CD8-positive, alpha-beta memory T cell (primary cell): ENCODE measurements at regions of chr7 and their contacts with region 1.

Region 1: DNA sequence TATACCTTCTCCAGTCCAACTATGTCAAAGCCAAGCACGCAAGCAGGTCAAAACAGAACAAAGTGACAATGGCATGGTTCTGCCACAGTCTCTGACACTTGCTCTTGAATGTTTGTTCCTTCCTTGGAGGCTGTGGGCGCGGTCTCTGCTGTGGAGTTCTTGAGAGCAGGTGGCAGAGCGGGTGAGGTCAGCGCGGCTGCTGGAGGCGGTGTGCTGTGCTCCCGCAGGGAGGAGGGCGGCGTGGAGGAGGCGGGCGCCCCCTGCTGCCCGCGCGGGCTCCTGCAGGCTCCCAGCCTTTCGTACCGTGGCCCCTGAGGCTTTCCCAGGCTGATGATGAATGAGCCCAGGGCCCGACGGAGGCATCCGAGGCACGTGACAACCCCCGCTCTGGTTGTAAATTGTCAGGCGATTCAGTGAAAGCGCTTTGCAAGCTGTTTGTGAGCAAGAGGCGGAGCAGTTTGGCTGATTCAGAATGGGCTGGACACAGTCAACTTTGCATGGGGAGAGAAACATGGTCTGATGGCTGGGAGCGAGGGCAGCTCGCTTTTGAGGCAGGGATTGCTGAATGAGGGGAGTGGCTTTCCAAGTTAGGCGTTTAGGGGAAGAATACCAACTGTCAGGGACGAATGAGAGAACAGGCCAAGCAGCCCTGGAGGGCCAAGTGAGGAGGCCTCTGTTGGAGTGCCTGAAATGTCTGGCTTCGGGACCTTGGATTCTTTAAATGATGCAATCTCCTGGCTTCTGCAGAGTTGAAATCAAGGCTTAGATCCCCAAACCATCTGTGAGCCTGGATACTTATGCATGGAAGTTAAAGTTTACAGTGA is 46.6 kb downstream of the CDHR3 start:
- DNase-seq: peak; percentile 63 to 81 (median 71)
- H3K4me3 ChIP-seq: no peak overlapping the region
- H3K4me3 Mint-ChIP-seq: peak overlapping the region in 5 of 7 donors; percentile 13 to 49 (median 30)
- H3K27ac ChIP-seq: no peak overlapping the region
- H3K27ac Mint-ChIP-seq: peak overlapping the region in 6 of 8 donors; percentile 28 to 96 (median 72)
- H3K4me1 ChIP-seq: peaks cover 29% of the 10 kb centered on the region
- H3K4me1 Mint-ChIP-seq: peaks cover 8 to 28% (median 25%) of the 10 kb centered on the region in 3 donors
- H3K27me3 ChIP-seq: no peaks in the 10 kb centered on the region
- H3K27me3 Mint-ChIP-seq: peaks cover 0 to 3% of the 10 kb centered on the region in 2 donors

Region 2: GRCh38 chr7:105734233-105734632 is 275.4 kb before region 1 on chr7:
- CTCF ChIA-PET with region 1: no interaction called
- POLR2A ChIA-PET with region 1: no interaction called
- DNase-seq: no peak
- H3K4me3 ChIP-seq: no peak overlapping the region
- H3K4me3 Mint-ChIP-seq: no peak overlapping the region
- H3K27ac ChIP-seq: no peak overlapping the region
- H3K27ac Mint-ChIP-seq: no peak overlapping the region
- H3K4me1 ChIP-seq: no peaks in the 10 kb centered on the region
- H3K4me1 Mint-ChIP-seq: peaks cover 0 to 16% (median 11%) of the 10 kb centered on the region in 3 donors
- H3K27me3 ChIP-seq: no peaks in the 10 kb centered on the region
- H3K27me3 Mint-ChIP-seq: no peaks in the 10 kb centered on the region

Region 3: DNA sequence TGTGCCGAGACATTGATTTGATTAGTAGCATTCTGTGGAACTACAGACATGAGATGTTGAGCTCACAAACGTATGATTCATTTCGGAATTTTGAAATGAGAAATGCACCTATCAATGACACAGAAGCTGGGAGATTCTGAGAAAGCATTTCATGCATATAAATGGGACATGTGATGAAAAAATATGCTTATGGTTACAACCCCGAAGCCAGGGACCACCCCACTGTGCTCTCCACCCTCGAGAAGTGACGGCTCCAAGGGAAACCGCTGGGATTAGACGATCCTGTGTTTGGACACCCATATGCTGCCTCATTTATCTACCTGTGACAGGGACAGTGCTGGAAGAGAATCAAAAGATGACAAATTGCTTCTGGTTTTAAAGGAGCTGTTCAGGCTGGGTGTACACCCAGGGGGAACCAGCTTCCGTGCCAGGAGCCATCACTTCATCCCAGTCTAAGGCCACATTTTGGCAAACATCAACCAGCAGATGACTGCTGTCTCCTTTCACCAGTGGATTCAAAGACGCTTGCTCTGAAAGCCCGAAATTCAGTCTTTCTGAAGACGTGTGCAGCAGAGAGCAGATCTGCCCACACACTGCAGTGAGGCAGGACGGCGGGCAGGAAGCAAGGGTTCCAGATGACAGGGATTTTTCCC is 243.1 kb before region 1 on chr7:
- CTCF ChIA-PET with region 1: interaction called, 34 read pairs
- POLR2A ChIA-PET with region 1: no interaction called
- DNase-seq: no peak
- H3K4me3 ChIP-seq: no peak overlapping the region
- H3K4me3 Mint-ChIP-seq: no peak overlapping the region
- H3K27ac ChIP-seq: no peak overlapping the region
- H3K27ac Mint-ChIP-seq: peak overlapping the region in 3 of 8 donors; percentile 22 to 50 (median 29)
- H3K4me1 ChIP-seq: peaks cover 3% of the 10 kb centered on the region
- H3K4me1 Mint-ChIP-seq: peaks cover 13 to 49% (median 28%) of the 10 kb centered on the region in 3 donors
- H3K27me3 ChIP-seq: no peaks in the 10 kb centered on the region
- H3K27me3 Mint-ChIP-seq: peaks cover 0 to 1% of the 10 kb centered on the region in 2 donors